HEK293 (cell line): ENCODE measurements at regions of chr5 and their contacts with region 1.

Region 1: DNA sequence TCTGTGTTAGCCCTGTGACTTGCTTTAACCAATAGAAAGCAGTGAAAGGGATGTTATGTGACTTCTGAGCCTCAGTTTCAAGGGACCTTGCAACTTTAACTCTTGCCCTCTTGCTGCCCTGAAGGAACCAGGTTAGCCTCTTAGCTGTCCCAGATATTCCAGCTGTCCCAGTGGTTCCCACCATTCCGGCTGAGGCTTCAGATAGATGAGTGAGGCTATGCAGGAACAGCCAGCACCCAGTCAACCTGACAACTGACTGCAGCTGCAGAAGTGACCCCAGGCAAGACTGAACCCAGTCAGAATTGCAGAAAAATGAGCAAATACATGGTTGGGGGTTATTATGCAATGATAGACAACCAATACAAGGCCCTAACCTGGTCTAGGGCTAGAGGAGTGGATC is 10.4 kb upstream of the CDC23 start:
- H3K4me3 ChIP-seq: no peak overlapping the region
- H3K27ac ChIP-seq: no peak overlapping the region
- H3K4me1 ChIP-seq: no peaks in the 10 kb centered on the region
- CTCF ChIP-seq: no peak

Region 2: DNA sequence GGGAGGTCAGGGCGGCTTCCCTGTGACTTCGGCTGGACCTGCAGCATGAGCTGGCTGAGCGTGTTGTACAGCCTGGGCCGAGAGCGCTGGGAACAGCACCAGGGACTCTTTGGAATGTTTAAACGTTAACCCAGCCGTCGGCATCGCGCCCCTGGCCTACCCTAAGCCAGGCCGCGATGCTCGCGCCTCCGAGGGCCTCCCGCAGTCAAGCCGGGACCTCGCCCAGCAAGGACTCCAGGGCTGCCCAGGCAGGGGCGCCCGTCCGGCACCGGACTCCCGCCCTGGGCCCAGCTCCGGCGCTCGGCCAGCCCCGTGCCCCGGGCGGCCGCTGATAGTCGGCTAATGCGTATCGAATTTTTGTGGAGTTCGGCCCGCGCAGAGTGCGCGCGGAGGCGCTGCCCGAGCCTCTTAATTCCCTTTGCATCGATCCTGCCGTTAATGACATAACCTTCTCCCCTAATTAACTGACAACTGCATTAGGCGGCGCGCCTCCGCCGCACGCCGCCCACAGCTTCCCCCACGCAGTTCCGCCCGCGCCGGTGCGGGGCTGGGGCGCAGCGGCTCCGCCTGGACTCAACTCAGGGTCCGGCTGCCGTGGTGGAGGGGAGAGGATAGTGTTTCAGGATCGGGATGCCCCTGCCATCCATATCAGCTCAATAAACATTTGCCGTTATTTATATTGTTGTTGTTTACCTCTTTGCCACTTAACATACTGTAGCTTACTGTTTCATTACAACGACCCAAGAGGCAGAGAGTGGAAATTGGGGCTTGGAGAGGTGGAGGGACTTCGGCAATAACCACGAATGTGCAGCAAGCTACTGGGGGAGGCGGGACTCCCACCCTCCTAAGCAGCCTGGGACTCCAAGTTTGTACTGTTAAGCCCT is 18.4 kb after region 1 on chr5:
- CTCF ChIA-PET with region 1: interaction called, 12 read pairs
- POLR2A ChIA-PET with region 1: no interaction called
- H3K4me3 ChIP-seq: no peak overlapping the region
- H3K27ac ChIP-seq: peak overlapping the region; percentile 43; the same call in 1 of the 2 replicates
- H3K4me1 ChIP-seq: peaks cover 6% of the 10 kb centered on the region; the same call in 1 of the 2 replicates
- CTCF ChIP-seq: no peak

Region 3: GRCh38 chr5:138274189-138274853 is 50.8 kb after region 1 on chr5 and contains the start of gene GFRA3:
- CTCF ChIA-PET with region 1: interaction called, 88 read pairs
- POLR2A ChIA-PET with region 1: no interaction called
- H3K4me3 ChIP-seq: no peak within 1 kb of the TSS
- H3K27ac ChIP-seq: peak within 1 kb of the TSS; percentile 25; the same call in 1 of the 2 replicates
- H3K4me1 ChIP-seq: peaks cover 21% of the 10 kb centered on the region
- CTCF ChIP-seq: no peak

Region 4: DNA sequence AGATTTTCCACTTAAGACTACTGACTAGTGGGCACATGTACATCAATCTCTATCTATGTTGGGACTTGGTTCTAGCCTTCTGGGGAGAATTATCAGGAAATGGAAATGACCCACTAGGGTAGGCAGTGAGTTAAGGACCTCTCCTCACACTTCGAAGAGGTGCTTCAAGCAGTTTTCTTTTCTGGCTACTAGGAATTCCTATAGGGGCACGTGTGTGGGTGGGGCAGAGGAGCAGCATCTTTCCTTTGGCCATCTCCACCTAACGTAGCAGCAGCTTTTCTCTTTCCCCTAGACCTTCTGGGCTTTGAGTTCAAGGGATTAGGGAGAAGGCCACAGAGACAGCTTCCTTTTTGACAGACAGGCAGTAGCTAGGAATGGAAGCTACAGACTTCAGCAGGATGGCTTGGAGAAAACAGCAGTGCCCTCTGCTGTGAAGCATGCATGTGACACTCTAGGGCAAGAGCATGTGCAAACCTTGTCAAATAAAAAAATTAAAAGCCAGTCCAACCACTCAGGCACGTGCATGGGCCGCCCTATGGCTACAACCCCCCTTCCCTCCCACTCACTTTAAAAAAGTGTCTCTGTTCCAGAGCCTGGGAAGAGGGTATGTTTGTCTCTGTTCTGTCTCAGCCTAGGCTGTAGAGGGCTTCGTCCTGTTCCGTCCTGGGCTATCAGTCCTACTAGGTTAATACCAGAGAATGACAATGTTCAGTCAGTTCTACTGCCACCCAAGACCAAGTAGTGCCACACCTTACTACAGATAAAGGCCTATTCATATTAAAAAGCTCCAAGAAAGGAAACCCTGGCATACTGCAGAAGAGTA is 59.6 kb after region 1 on chr5:
- CTCF ChIA-PET with region 1: interaction called, 88 read pairs
- POLR2A ChIA-PET with region 1: interaction called, 3 read pairs
- H3K4me3 ChIP-seq: no peak overlapping the region
- H3K27ac ChIP-seq: no peak overlapping the region
- H3K4me1 ChIP-seq: no peaks in the 10 kb centered on the region
- CTCF ChIP-seq: peak; percentile 74